H1 (cell line): ENCODE measurements at regions of chr6 and their contacts with region 1.

Region 1: DNA sequence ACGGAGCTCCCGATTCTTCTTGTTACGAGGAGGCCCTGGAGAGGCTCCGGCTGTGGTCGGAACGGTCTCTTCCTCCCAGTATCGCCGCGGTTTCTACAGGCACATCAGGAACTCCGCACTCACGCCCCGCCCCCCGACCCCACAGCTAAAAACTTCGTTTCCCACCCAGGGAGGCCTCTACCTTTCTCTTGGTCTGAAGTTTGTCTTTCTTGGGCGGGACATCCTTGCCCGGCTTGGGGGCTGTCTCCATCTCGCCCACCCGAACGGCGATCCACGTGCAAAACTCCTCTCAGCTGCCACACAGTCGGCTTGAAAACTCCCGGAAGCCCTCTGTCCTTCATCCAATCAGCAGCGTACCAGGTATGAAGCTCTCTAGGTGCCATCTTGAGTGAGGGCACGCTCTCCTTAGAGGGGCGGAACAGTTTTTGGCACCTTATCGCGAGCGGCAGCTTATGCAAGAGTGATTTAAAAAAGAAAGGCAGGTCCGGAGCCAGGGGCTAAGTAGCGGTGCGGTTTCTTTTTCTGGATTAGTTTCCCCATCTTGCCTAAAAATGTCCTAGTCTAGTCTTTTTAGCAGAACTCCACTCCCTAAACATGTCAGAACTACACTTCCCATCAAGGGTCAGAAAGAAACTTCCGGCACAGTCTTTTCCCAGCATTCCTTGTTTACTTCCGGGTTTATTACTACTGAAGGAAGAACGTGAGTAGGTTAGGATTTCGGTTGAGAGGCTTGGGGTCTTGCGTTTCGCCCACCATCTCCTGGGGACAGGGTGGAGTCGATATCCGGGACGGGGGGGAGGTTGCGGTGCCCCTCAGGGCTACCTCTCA is at the starts of genes PFDN6 and WDR46:
- DNase-seq: peak in 1 of 2 experiments; percentile 84
- H3K4me3 ChIP-seq: peak within 1 kb of the TSS; percentile 74 to 97 (median 84)
- H3K27ac ChIP-seq: peak within 1 kb of the TSS; percentile 37; the same call in 1 of the 2 replicates
- H3K4me1 ChIP-seq: peaks cover 0 to 11% (median 5%) of the 10 kb centered on the region in 4 experiments; a peak in 5 of 7 replicates
- H3K27me3 ChIP-seq: no peaks in the 10 kb centered on the region
- CTCF ChIP-seq: no peak
- EP300 ChIP-seq: no peak
- POLR2A ChIP-seq: peak in 1 of 2 experiments; percentile 76; a peak in 2 of 3 replicates
- RAD21 ChIP-seq: no peak
- total RNA-seq, gene PFDN6: 93.3 and 95.7 TPM in 2 replicates
- total RNA-seq, gene WDR46: 91.0 and 99.4 TPM in 2 replicates

Region 2: GRCh38 chr6:33317669-33318425 is 28.7 kb after region 1 on chr6 and contains the start of gene ZBTB22:
- CTCF ChIA-PET with region 1: interaction called, 3 read pairs
- POLR2A ChIA-PET with region 1: interaction called, 11 read pairs
- DNase-seq: peak; percentile 95 to 96
- H3K4me3 ChIP-seq: peak within 1 kb of the TSS; percentile 67 to 89 (median 78)
- H3K27ac ChIP-seq: peak within 1 kb of the TSS; percentile 83
- H3K4me1 ChIP-seq: peaks cover 0 to 34% (median 22%) of the 10 kb centered on the region in 4 experiments; a peak in 6 of 7 replicates
- H3K27me3 ChIP-seq: no peaks in the 10 kb centered on the region
- CTCF ChIP-seq: no peak
- EP300 ChIP-seq: no peak
- POLR2A ChIP-seq: peak in 1 of 2 experiments; percentile 70; a peak in 2 of 3 replicates
- RAD21 ChIP-seq: no peak
- total RNA-seq, gene ZBTB22: 9.8 and 9.9 TPM in 2 replicates